Activated T-helper 2 cell treated with anti-CD3 and anti-CD28 coated beads, Interferon-gamma antibody, Interleukin-2, Interleukin-4, amounts not matched to agents 10 μg/mL and 5 μg/mL and 100 μg/mL, durations not matched to agents 14 hours and 24 hours and 36 hours (primary cell): ENCODE measurements at regions of chr2 and their contacts with region 1.

Region 1: GRCh38 chr2:175203621-175204496 is 22.3 kb upstream of the ATP5MC3 start:
- DNase-seq: peak; percentile 22
- H3K4me3 Mint-ChIP-seq: no peak overlapping the region
- H3K27ac Mint-ChIP-seq: no peak overlapping the region
- H3K4me1 Mint-ChIP-seq: peaks cover 8% of the 10 kb centered on the region
- H3K27me3 Mint-ChIP-seq: peaks cover 13% of the 10 kb centered on the region

Region 2: GRCh38 chr2:175251425-175252041 is 47.7 kb after region 1 on chr2:
- intact Hi-C with region 1: loop called (anchors 1 kb)
- DNase-seq: no peak
- H3K4me3 Mint-ChIP-seq: no peak overlapping the region
- H3K27ac Mint-ChIP-seq: no peak overlapping the region
- H3K4me1 Mint-ChIP-seq: peaks cover 13% of the 10 kb centered on the region
- H3K27me3 Mint-ChIP-seq: peaks cover 2% of the 10 kb centered on the region

Region 3: GRCh38 chr2:175463589-175464310 is 259.9 kb after region 1 on chr2:
- intact Hi-C with region 1: no loop called
- DNase-seq: no peak
- H3K4me3 Mint-ChIP-seq: no peak overlapping the region
- H3K27ac Mint-ChIP-seq: no peak overlapping the region
- H3K4me1 Mint-ChIP-seq: no peaks in the 10 kb centered on the region
- H3K27me3 Mint-ChIP-seq: no peaks in the 10 kb centered on the region

Region 4: GRCh38 chr2:176038694-176039093 is 834.8 kb after region 1 on chr2:
- intact Hi-C with region 1: no loop called
- DNase-seq: no peak
- H3K4me3 Mint-ChIP-seq: no peak overlapping the region
- H3K27ac Mint-ChIP-seq: no peak overlapping the region
- H3K4me1 Mint-ChIP-seq: no peaks in the 10 kb centered on the region
- H3K27me3 Mint-ChIP-seq: peaks cover 19% of the 10 kb centered on the region